ENCODE measurements at regions of chr19 and their contacts with region 1.

Region 1: GRCh38 chr19:46840136-46840942 is 10.3 kb downstream of the AP2S1 start:
- DNase-seq: no peak
- H3K4me3 ChIP-seq: no peak overlapping the region
- H3K27me3 ChIP-seq: no peaks in the 10 kb centered on the region
- CTCF ChIP-seq: peak; percentile 90

Region 2: GRCh38 chr19:46746281-46747013 is 93.9 kb before region 1 on chr19 and contains the start of gene STRN4:
- CTCF ChIA-PET with region 1: interaction called, 23 read pairs
- POLR2A ChIA-PET with region 1: no interaction called
- DNase-seq: no peak
- H3K4me3 ChIP-seq: peak within 1 kb of the TSS; percentile 99
- H3K27me3 ChIP-seq: no peaks in the 10 kb centered on the region
- CTCF ChIP-seq: no peak
- polyA plus RNA-seq, gene STRN4: 40.5 and 78.6 TPM in 2 replicates

Region 3: GRCh38 chr19:46759817-46760333 is 80.5 kb before region 1 on chr19:
- CTCF ChIA-PET with region 1: interaction called, 89 read pairs
- POLR2A ChIA-PET with region 1: no interaction called
- DNase-seq: peak; percentile 99
- H3K4me3 ChIP-seq: no peak overlapping the region
- H3K27me3 ChIP-seq: no peaks in the 10 kb centered on the region
- CTCF ChIP-seq: no peak

Region 4: DNA sequence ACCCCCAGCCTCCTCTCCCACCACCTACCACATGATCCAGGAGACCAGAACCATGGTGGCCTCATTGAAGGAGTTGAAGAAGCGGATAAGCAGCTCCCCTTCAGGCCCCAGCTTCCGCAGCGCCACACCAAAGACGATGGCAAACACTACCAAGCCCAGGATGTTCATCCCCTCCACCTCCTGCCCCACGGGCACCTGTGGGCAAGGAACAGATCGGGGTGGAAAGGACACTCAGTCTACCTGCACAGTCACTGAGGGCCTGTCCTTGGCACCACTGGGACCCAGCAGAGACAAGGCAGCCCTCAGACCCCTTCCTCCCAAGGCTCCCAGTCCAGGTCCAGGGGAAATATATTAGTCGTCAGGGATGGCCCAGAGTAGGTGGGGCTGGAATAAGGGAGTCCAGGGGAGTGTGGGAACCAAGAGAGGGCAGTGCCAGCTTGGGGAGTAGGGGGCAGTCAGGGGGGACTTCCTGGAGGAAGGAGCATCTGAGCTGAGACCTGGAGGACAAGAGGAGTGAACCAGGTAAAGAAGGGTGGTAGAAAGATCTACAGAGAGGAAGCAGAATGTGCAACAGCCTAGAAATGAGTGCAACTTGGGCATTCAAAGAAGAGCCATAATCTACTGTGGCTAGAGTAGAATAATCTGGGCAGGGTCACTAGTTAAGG is 57.9 kb before region 1 on chr19:
- CTCF ChIA-PET with region 1: interaction called, 40 read pairs
- POLR2A ChIA-PET with region 1: no interaction called
- DNase-seq: no peak
- H3K4me3 ChIP-seq: no peak overlapping the region
- H3K27me3 ChIP-seq: no peaks in the 10 kb centered on the region
- CTCF ChIP-seq: no peak

Region 5: DNA sequence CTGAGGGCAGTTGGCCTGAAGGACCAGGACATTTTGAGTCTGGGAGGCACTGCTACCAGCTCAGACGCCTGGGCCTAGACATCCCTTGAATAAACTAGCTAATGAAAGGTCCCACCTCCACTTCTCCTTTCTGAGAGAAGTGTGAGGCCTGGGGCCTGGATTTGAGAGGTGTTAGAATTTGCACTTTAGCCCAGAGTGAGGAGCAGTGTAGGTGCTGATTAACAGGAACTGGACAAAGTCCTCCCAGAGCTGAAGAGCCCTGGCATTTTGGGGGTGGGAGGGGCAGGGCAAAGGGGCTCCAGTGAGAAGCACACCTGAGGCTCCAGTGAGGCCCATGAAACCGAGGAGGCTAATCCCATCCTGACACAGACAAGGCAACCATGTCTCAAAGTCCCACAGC is 36.8 kb before region 1 on chr19:
- CTCF ChIA-PET with region 1: no interaction called
- POLR2A ChIA-PET with region 1: interaction called, 10 read pairs
- DNase-seq: no peak
- H3K4me3 ChIP-seq: no peak overlapping the region
- H3K27me3 ChIP-seq: no peaks in the 10 kb centered on the region
- CTCF ChIP-seq: no peak